Dorsolateral prefrontal cortex (tissue), 120 donors: ENCODE measurements at regions of chr10 and their contacts with region 1.

Region 1: GRCh38 chr10:98013122-98013521 is 17.3 kb downstream of the CRTAC1 start:
- DNase-seq: no peak
- H3K4me3 ChIP-seq: no peak overlapping the region
- H3K27ac ChIP-seq: no peak overlapping the region
- H3K27me3 ChIP-seq: no peaks in the 10 kb centered on the region
- CTCF ChIP-seq: no peak

Region 2: DNA sequence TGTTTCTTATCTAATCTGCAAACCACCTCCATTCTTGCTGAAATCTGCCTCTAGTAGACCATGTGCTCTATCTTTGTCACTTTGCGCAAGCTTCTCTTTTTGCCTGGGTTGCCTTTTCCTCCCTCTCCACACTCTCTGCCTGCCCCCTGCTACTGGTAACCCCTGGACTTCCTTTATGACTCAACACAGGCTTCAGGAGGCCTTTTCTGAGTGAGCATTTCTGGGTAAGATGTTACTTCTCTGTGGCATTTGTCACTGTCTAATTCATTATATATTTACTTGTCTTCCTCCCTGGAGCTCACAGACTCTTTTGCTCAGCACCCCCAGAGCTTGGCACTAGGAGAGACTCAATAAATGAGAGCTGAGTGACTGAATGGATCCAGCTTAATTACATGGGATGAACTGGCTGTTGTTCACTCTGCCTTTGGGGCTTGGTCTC is 155.1 kb before region 1 on chr10:
- intact Hi-C with region 1: no loop called
- DNase-seq: no peak
- H3K4me3 ChIP-seq: no peak overlapping the region
- H3K27ac ChIP-seq: peak overlapping the region in 5 of 59 donors; percentile 2 to 51 (median 12)
- H3K27me3 ChIP-seq: no peaks in the 10 kb centered on the region
- CTCF ChIP-seq: no peak

Region 3: DNA sequence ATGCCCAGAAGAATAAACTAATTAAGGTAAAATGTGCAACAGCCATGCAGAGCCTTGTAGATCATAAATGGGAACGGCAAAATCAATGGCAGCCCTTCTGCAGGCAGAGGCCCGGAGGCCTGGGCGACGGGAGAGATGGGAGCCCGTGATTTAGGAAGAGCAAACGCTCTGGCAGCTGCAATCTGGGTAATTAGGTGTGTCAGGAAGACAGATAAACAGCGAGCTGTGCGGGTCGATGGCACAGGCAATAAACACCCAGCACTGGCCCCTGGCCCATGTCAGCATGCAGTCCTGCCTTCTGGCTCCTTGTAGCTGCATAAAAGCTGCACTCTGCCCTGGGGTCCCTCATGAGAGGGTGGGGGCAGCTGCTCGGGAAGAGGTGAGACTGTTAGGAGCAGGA is 85.5 kb before region 1 on chr10:
- intact Hi-C with region 1: loop called in 1 of 2 experiments (anchors 5 kb)
- DNase-seq: peak in 1 of 10 donors; percentile 8
- H3K4me3 ChIP-seq: no peak overlapping the region
- H3K27ac ChIP-seq: no peak overlapping the region
- H3K27me3 ChIP-seq: no peaks in the 10 kb centered on the region
- CTCF ChIP-seq: no peak

Region 4: GRCh38 chr10:98088186-98088971 is 75.3 kb after region 1 on chr10:
- intact Hi-C with region 1: no loop called
- DNase-seq: peak in 2 of 10 donors; percentile 19 to 40
- H3K4me3 ChIP-seq: no peak overlapping the region
- H3K27ac ChIP-seq: no peak overlapping the region
- H3K27me3 ChIP-seq: no peaks in the 10 kb centered on the region
- CTCF ChIP-seq: no peak

Region 5: DNA sequence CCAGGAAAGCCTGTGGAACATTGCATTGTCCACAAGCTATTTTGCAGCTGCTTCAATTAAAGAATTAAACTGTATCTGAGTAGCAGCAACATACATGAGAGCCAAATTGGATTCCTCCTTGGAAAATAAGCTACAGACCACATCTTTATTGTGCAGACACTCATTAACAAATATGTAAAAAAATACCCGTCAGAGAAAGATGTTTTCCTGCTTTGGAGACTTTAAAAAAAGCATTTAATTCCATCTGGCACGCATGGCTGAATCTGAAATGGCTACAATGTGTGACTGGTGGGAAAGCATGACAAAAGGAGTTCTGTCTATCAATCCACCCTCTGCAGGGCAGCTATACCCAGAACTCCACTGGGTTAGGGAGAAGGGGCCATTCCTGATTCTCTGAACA is 506.7 kb after region 1 on chr10:
- intact Hi-C with region 1: no loop called
- DNase-seq: no peak
- H3K4me3 ChIP-seq: no peak overlapping the region
- H3K27ac ChIP-seq: no peak overlapping the region
- H3K27me3 ChIP-seq: peaks cover 0 to 5% (median 0%) of the 10 kb centered on the region in 45 donors
- CTCF ChIP-seq: no peak